ENCODE measurements at regions of chr1 and their contacts with region 1.

Region 1: DNA sequence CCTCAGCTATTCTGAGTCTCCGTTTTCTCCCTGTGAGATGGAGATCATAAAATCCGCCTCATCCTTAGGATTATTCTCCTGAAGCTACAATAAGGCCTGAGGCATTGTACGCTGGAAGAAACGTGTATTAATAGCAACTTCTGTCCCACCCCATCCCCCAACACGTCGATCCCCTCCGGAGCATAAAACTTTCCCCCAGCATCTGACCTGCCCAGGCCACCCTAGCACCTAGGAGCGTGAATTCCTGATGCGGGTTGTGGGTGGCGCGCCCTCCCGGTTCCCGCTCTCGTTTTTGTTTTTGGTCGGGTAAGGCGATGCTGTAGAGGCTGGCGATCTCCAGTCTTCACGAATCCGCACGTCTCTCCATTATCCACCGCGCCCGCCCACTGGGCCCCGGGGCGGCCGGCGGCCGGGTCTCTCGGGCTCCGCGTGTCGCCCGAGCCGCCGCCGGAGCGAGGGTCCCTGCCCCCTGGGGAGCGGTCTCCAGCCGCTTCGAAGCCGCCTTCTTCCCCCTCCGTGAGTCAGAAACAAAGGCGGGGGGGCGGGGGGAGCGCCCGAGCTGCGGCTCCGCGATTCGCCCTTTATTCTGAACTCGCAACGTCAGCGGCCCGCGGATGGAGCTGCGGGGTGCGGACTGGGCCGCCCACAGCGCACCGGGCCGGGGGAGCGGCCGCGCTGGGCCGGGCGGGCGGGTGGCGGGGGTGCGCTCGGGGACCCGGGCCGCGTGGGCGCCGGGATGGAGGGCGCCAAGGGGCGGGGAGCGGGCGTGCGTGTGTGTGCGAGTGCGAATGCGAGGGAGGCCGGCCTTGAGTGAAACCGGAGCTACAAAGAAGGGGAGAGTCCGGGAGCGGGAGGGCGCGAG is at the start of gene PLEKHO1:
- DNase-seq: peak; percentile 92
- H3K4me3 Mint-ChIP-seq: peak within 1 kb of the TSS; percentile 91
- H3K27ac Mint-ChIP-seq: peak within 1 kb of the TSS; percentile 87
- H3K4me1 Mint-ChIP-seq: peaks cover 55% of the 10 kb centered on the region
- H3K27me3 Mint-ChIP-seq: peaks cover 24% of the 10 kb centered on the region
- total RNA-seq, gene PLEKHO1: 25.2 and 26.4 TPM in 2 replicates

Region 2: GRCh38 chr1:150110116-150110515 is 39.4 kb before region 1 on chr1:
- intact Hi-C with region 1: loop called (anchors 2 kb)
- DNase-seq: no peak
- H3K4me3 Mint-ChIP-seq: peak overlapping the region; percentile 45
- H3K27ac Mint-ChIP-seq: peak overlapping the region; percentile 79
- H3K4me1 Mint-ChIP-seq: peaks cover 43% of the 10 kb centered on the region
- H3K27me3 Mint-ChIP-seq: no peaks in the 10 kb centered on the region

Measured in activated CD4-positive, alpha-beta T cell treated with anti-CD3 and anti-CD28 coated beads, Interleukin-2, amount 10 ng/mL, durations not matched to agents 24 days and 14 days (primary cell).